ENCODE measurements at regions of chr13 and their contacts with region 1.

Region 1: GRCh38 chr13:32001769-32002168 is 29.8 kb upstream of the FRY start:
- DNase-seq: no peak
- ATAC-seq: no peak
- H3K4me3 ChIP-seq: no peak overlapping the region
- H3K4me3 Mint-ChIP-seq: no peak overlapping the region
- H3K27ac ChIP-seq: no peak overlapping the region
- H3K27ac Mint-ChIP-seq: no peak overlapping the region
- H3K4me1 ChIP-seq: no peaks in the 10 kb centered on the region
- H3K4me1 Mint-ChIP-seq: no peaks in the 10 kb centered on the region
- H3K27me3 ChIP-seq: no peaks in the 10 kb centered on the region
- H3K27me3 Mint-ChIP-seq: no peaks in the 10 kb centered on the region

Region 2: DNA sequence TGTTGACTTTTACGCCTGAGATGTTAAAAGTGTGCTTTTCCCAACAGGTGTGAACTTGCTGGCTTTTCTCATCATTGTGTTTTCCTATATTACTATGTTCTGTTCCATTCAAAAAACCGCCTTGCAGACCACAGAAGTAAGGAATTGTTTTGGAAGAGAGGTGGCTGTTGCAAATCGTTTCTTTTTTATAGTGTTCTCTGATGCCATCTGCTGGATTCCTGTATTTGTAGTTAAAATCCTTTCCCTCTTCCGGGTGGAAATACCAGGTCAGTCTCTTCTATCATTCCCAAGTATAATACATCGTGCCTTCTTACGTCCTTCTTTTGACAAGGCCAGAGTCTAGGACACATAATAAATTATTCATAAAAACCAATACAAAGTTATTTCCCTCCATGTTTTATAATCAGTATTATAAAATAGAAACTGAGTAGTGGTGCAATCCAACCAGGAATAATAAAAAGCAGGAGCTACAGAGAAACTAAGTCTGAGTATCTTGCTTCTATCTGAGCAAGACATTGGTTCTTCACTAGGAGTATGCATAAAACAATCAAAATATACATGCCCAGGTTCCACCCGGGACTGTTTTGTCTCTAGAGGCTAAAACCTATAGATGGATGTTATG is 204.5 kb before region 1 on chr13:
- CTCF ChIA-PET with region 1: no interaction called
- POLR2A ChIA-PET with region 1: no interaction called
- DNase-seq: no peak
- ATAC-seq: no peak
- H3K4me3 ChIP-seq: no peak overlapping the region
- H3K4me3 Mint-ChIP-seq: no peak overlapping the region
- H3K27ac ChIP-seq: no peak overlapping the region
- H3K27ac Mint-ChIP-seq: no peak overlapping the region
- H3K4me1 ChIP-seq: peaks cover 0 to under 1% of the 10 kb centered on the region in 2 experiments
- H3K4me1 Mint-ChIP-seq: peaks cover 0 to 9% (median 3%) of the 10 kb centered on the region in 3 donors
- H3K27me3 ChIP-seq: no peaks in the 10 kb centered on the region
- H3K27me3 Mint-ChIP-seq: peaks cover 3 to 10% of the 10 kb centered on the region in 2 donors

Region 3: DNA sequence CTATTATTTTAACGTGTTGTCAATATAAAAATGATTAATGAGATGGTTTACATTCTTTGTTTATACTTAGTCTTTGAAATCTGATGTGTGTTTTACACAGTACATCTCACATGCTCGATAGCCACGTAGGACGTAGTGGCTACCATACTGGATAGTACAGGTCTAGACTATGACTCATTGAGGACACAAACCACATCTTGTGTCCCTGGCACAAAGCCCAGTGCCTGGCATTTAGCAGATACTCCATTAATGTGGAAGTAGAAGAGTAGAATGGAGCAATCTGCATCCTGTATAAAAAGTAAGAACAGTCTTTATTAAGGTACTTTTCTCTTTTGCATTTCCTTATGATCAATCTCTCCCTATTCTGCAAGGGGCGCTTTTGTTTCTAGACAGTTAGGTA is 19.2 kb before region 1 on chr13:
- CTCF ChIA-PET with region 1: no interaction called
- POLR2A ChIA-PET with region 1: no interaction called
- DNase-seq: peak in 1 of 35 experiments; percentile 20
- ATAC-seq: no peak
- H3K4me3 ChIP-seq: no peak overlapping the region
- H3K4me3 Mint-ChIP-seq: no peak overlapping the region
- H3K27ac ChIP-seq: no peak overlapping the region
- H3K27ac Mint-ChIP-seq: no peak overlapping the region
- H3K4me1 ChIP-seq: no peaks in the 10 kb centered on the region
- H3K4me1 Mint-ChIP-seq: no peaks in the 10 kb centered on the region
- H3K27me3 ChIP-seq: peaks cover 0 to 5% of the 10 kb centered on the region in 2 experiments
- H3K27me3 Mint-ChIP-seq: peaks cover 0 to 13% of the 10 kb centered on the region in 2 donors

Region 4: DNA sequence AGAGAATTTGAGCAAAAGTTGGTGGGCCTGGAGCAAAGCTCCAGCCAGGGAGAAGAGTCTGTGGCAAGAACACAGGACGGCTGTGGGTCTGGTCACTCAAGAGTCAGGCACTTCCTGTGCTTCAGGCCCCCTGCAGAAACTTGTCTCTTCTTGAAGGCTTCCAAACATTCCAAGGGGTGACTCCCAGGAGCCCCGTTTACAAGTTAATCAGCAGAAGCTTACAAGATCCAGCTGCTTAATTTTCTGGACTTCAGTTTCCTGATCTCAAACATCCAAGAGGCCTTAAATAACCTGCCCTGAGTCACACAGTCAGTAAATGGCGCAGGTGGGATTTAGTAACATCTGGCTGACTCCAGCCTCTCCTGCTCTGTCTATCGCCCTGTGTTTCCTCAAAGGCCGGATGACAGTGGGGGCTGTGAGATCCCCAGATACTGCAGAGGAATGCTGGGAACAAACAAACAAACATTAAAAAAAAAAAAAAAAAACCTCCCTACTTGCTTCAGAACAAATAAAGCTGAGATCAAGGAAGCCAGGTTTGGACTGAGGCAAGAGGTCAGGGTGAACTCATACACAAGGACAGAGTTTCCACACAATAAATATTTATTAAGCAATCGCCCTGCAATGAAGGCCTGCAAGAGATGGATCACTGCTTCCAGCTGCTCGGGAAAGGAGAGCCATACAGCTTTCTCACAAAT is 1640.8 kb after region 1 on chr13:
- CTCF ChIA-PET with region 1: interaction called in 1 of 2 experiments, 12 read pairs
- POLR2A ChIA-PET with region 1: no interaction called
- DNase-seq: no peak
- ATAC-seq: no peak
- H3K4me3 ChIP-seq: no peak overlapping the region
- H3K4me3 Mint-ChIP-seq: no peak overlapping the region
- H3K27ac ChIP-seq: no peak overlapping the region
- H3K27ac Mint-ChIP-seq: no peak overlapping the region
- H3K4me1 ChIP-seq: no peaks in the 10 kb centered on the region
- H3K4me1 Mint-ChIP-seq: peaks cover 0 to 4% (median 0%) of the 10 kb centered on the region in 3 donors
- H3K27me3 ChIP-seq: no peaks in the 10 kb centered on the region
- H3K27me3 Mint-ChIP-seq: no peaks in the 10 kb centered on the region

Measured in T-cell (primary cell).